GM10248 (cell line): ENCODE measurements at regions of chr10 and their contacts with region 1.

Region 1: DNA sequence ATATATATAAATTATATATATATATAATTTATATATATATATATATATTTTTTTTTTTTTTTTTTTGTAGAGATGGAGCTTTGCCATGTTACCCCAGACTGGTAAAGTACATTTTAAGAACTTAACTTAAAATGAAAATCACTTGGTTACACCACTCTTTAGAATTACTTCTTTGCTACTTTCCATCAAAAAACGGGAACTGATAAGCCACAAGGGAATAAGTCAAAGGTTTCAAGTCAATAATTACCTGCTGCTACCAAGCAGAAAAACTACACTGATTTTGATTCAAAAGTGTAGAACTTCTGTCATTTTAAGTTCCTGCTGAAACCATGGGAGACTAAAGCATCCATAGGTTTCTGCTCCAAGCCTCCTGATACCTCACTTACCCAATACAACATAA is 12.2 kb downstream of the PPA1 start:
- DNase-seq: no peak
- CTCF ChIP-seq: no peak

Region 2: GRCh38 chr10:69839696-69840345 is 381.2 kb before region 1 on chr10:
- CTCF ChIA-PET with region 1: no interaction called
- POLR2A ChIA-PET with region 1: no interaction called
- DNase-seq: no peak
- CTCF ChIP-seq: no peak

Region 3: GRCh38 chr10:70206762-70207161 is 14.3 kb before region 1 on chr10:
- CTCF ChIA-PET with region 1: interaction called, 24 read pairs
- POLR2A ChIA-PET with region 1: interaction called, 5 read pairs
- DNase-seq: no peak
- CTCF ChIP-seq: no peak

Region 4: GRCh38 chr10:70331486-70332268 is 110.6 kb after region 1 on chr10:
- CTCF ChIA-PET with region 1: interaction called, 16 read pairs
- POLR2A ChIA-PET with region 1: no interaction called
- DNase-seq: peak; percentile 69
- CTCF ChIP-seq: peak; percentile 35

Region 5: GRCh38 chr10:70355051-70356021 is 134.3 kb after region 1 on chr10:
- CTCF ChIA-PET with region 1: interaction called, 529 read pairs
- POLR2A ChIA-PET with region 1: interaction called, 3 read pairs
- DNase-seq: peak; percentile 62
- CTCF ChIP-seq: no peak

Region 6: DNA sequence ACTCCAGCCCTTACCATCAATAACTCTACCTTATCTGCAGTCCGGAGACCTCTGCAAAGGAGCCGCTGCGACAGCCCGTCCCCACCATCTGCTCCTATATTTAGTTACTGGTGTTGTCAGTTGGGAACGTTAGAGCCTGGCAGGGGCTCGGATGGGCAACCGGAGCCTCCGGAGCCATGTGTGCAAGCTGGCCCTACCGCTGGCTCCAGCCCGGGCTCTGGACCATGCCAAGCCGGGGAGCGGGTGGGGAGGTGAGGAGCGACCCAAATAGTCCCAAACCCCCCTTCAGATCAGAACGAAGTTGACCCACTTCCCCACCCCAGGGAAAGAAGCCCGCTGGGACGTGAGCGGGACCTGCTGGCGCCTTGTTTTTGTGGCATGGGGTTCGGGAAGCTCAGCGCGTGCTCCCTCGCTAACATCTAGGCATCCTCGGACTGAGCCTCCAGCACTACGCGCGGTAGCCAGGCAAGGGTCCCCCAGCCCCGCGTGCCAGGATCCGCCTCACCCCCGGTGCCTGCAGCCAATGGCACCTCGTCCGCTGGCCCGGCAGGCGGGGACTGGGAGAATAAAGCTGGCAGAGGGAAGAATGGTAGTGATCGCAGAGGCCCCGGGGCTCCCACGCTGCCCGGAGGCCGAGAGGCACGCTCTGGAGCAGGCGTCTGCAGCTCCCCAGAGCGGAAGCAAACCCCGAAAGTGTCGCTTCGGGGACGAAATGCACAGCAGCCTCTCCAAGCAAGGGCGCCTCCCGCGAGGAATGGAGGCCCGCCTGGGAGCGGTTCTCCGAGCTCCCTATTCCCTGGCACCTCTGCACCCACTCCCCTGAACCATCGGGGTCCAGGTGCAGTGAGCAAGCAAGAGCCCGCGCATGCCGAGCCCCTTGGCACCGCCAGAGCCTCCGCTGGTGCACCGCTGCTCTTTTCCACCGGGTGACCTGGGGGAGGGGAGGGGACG is 160.7 kb after region 1 on chr10:
- CTCF ChIA-PET with region 1: interaction called, 10 read pairs
- POLR2A ChIA-PET with region 1: no interaction called
- DNase-seq: peak; percentile 68
- CTCF ChIP-seq: peak; percentile 1